Caco-2 (cell line): ENCODE measurements at regions of chr2 and their contacts with region 1.

Region 1: DNA sequence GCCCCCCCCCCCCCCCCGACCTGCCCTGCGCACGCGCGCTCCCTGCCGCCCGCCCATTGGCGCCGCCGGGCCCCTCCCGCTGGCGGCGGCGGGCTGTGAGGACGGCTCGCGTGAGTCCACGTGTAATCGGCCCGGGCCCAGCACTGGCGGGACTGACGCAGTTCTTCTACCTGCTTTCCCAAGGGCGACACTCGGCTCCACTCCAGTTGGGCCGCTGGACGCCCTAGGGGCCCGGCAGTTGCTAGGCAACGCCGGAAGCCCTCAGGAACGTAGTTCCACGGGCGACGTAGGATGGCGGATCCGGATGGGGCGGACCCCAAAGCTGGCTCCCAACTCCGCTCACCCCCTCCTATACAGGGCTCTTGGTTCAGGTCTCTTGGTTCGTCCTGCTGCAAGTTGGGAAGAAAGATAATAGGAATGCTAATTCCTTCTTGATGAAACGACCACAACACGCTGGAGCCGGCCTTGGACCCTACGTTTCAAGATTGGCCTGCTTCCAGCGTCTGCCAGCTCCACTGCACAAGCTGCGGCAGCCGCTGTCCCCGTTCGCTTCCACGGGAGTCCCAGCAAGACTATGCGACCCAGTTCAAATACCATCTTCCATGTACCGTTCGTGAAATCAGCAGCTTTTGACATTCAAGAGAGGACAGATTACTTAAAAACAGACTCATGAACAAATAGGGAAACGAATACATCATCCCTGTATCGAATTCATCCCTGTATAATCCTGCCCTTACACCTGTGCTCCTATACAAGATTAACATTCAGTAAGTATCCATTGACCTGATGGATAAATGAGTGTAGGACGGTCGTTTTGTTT is 415 bp upstream of the MCFD2 start:
- DNase-seq: peak; percentile 96 to 97
- H3K4me3 ChIP-seq: peak overlapping the region; percentile 93
- H3K4me3 Mint-ChIP-seq: peak overlapping the region; percentile 88
- H3K27ac Mint-ChIP-seq: peak overlapping the region; percentile 0
- H3K4me1 ChIP-seq: peaks cover 17% of the 10 kb centered on the region
- H3K4me1 Mint-ChIP-seq: peaks cover 19% of the 10 kb centered on the region
- H3K27me3 ChIP-seq: no peaks in the 10 kb centered on the region
- H3K27me3 Mint-ChIP-seq: no peaks in the 10 kb centered on the region
- CTCF ChIP-seq: no peak

Region 2: DNA sequence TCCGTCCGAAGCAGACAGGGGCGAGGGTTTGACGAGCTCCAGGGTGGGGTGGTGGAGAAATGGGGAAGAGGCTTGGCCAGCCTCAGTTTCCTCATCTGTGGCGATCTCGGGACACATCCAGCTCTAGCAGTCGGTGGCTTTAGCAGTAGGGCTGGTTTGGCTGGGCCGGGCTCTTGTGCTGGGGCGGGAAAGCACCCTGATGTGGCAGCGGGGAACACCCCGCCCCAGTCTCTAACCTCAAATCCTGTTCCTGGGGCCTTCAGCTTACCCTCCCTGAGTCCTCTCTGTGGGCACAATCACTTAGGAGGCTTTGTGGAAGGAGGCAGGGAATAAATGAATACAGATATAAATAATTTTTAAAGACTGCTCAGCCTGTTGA is 26.1 kb after region 1 on chr2:
- CTCF ChIA-PET with region 1: no interaction called
- POLR2A ChIA-PET with region 1: no interaction called
- intact Hi-C with region 1: loop called (anchors 1 kb)
- DNase-seq: peak in 1 of 2 experiments; percentile 43
- H3K4me3 ChIP-seq: peak overlapping the region; percentile 94
- H3K4me3 Mint-ChIP-seq: peak overlapping the region; percentile 87
- H3K27ac Mint-ChIP-seq: peak overlapping the region; percentile 82
- H3K4me1 ChIP-seq: peaks cover 16% of the 10 kb centered on the region
- H3K4me1 Mint-ChIP-seq: peaks cover 24% of the 10 kb centered on the region
- H3K27me3 ChIP-seq: no peaks in the 10 kb centered on the region
- H3K27me3 Mint-ChIP-seq: no peaks in the 10 kb centered on the region
- CTCF ChIP-seq: no peak

Region 3: GRCh38 chr2:46967990-46968647 is 52.1 kb after region 1 on chr2:
- CTCF ChIA-PET with region 1: interaction called, 4 read pairs
- POLR2A ChIA-PET with region 1: no interaction called
- intact Hi-C with region 1: loop called (anchors 1 kb)
- DNase-seq: peak in 1 of 2 experiments; percentile 36
- H3K4me3 ChIP-seq: no peak overlapping the region
- H3K4me3 Mint-ChIP-seq: no peak overlapping the region
- H3K27ac Mint-ChIP-seq: peak overlapping the region; percentile 80
- H3K4me1 ChIP-seq: peaks cover 45% of the 10 kb centered on the region
- H3K4me1 Mint-ChIP-seq: peaks cover 32% of the 10 kb centered on the region
- H3K27me3 ChIP-seq: no peaks in the 10 kb centered on the region
- H3K27me3 Mint-ChIP-seq: no peaks in the 10 kb centered on the region
- CTCF ChIP-seq: no peak

Region 4: DNA sequence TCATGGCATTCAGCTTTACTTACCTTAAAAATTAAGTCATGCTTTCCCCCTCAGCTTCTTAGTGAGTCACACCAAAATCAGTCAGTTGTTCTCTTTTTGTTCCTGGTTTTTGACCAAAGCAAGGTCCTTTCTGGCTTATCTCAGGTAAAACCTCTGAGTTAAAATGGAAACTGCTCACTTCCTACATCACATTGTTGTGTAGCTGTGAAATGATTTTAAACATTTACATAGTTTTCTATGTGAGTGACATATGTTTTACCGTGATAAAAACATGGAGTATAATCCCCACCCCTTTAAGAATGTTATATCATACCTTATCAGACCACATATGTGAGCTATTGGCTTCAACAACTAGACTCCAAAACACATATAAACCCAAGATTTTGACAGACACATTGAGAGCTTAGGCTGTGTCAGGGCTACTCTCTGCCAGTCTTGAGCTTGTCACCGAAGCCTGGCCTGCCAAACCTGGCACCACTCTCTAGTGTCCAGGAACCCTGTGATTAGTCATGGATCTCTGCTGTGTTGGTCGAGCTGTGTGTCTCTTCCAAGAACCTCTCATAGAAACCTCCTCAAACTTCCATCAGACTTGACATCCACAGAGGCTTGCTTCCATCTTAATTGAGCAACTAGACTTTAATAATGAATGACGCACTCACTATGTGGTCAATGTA is 1284.7 kb after region 1 on chr2:
- CTCF ChIA-PET with region 1: no interaction called
- POLR2A ChIA-PET with region 1: no interaction called
- intact Hi-C with region 1: no loop called
- DNase-seq: no peak
- H3K4me3 ChIP-seq: no peak overlapping the region
- H3K4me3 Mint-ChIP-seq: no peak overlapping the region
- H3K27ac Mint-ChIP-seq: no peak overlapping the region
- H3K4me1 ChIP-seq: no peaks in the 10 kb centered on the region
- H3K4me1 Mint-ChIP-seq: no peaks in the 10 kb centered on the region
- H3K27me3 ChIP-seq: no peaks in the 10 kb centered on the region
- H3K27me3 Mint-ChIP-seq: no peaks in the 10 kb centered on the region
- CTCF ChIP-seq: no peak